ENCODE measurements at regions of chr10 and their contacts with region 1.

Region 1: DNA sequence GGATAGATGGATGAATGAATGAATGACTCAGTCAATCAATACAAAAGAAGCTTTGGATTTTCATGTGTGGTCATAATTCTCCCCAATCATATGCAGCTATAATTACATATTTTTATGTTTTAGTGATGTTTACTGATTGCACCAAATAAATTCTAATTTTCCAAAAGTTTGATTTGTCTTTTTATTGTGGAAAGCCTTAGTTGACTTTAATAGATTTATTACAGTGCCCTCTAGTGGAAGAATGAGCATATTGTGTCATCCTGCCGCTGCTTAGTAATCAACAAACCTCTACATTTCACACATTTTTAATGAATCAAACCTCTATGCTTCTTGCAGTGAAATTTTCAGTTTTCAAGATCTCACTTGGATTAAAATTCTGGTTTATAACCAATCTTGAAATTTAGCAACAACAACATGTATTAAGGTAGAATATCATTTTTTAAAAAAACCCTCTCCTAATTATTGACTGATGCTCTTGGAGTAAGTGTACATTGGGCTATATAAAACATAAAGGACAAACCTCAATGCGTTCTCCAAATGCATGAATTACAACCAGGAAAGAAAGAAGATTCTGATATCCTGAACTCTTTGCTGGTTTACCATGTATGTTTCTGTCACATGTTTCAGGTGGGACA is 55.6 kb upstream of the PNLIP start:
- DNase-seq: no peak

Region 2: DNA sequence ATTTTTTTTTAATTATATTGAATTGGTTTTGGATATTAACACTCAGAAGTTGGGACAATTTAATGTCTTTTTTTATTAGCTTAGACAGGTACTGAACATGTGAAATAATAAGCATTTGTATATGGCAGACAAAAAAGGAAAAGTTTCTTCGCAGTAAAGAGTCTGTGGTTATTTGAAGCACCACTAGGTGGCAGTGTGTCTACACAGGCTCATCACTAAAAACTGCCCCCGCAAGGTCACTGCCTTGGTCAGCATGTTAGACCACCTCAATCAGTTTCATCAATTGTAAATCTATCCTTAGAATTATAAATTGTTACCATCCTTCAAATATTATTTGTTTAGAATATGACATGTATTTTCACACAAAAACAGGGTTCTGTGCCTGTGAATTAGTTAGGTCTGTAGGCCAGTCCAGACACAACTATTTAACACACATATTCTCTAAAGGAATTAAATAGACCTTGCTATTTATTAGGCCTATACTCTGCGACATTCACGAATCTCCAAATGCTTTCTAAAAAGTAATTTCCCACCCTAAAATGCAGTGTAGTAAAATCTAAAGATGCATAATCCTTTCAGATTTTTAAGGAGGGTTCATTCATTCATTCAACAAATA is 45.5 kb before region 1 on chr10:
- intact Hi-C with region 1: loop called (anchors 2 kb)
- DNase-seq: peak in 1 of 10 donors; percentile 15

Region 3: DNA sequence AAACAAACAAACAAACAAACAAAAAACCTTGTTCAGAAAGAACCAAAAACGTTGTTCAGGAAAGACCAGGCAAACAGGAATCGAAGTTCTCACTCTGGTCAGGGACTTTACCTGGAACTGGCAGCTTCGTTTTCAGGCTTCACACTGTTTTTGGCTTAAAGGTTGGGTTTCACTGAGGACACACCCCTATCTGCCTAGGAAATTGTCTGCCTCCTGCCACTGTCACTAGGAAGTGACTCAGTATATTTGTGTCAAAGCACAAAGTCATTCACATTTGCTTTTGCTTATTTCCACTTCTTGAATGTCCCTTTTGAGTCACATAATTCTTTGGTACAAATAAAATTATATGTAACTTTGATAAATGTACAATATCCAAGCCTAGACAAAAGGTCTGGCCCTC is 24.6 kb before region 1 on chr10:
- intact Hi-C with region 1: no loop called
- DNase-seq: no peak

Region 4: DNA sequence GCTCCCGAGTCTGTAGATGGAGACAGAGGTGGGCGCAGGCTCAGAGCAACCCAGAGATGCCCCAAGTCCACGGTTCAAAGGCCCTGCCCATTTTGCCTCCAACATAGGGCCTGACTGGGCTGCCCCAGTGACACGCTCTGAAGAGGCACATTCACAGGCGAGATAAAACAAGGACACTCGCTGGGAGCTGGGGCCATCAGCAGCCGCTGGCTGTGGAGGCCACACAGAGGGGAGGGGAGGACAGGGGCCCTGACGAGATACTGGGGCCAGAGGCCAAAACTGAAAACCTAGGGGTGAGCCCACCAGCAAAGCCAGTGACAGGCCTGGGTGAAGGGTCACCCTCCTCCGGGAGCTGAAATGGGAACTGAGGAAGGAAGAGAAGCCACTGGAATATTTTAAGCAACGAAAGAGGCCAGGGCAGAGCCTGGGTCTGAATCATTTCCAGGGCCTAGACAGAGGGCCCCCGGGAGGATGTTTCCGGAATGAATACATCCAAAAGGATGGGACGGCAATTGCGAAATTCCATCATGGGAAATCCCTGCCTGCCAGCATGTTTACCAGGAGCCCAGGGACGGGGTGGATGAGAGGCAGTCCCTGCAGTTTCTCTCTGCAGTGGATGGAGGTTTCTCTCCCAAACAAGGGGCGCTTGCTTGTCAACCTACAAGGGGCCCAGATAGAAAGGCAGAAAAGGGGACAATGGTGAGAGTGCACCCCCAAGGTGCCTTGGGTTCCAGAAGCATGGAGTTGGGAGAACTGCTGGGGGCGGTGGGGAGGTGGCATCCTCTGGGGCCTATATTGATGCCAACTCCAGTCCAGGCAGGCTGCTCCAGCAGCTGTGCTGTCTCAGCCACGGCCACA is 281.2 kb after region 1 on chr10:
- intact Hi-C with region 1: no loop called
- DNase-seq: no peak

Measured in posterior cingulate gyrus (tissue), 11 donors.